Dorsolateral prefrontal cortex (tissue), 120 donors: ENCODE measurements at regions of chr9 and their contacts with region 1.

Region 1: DNA sequence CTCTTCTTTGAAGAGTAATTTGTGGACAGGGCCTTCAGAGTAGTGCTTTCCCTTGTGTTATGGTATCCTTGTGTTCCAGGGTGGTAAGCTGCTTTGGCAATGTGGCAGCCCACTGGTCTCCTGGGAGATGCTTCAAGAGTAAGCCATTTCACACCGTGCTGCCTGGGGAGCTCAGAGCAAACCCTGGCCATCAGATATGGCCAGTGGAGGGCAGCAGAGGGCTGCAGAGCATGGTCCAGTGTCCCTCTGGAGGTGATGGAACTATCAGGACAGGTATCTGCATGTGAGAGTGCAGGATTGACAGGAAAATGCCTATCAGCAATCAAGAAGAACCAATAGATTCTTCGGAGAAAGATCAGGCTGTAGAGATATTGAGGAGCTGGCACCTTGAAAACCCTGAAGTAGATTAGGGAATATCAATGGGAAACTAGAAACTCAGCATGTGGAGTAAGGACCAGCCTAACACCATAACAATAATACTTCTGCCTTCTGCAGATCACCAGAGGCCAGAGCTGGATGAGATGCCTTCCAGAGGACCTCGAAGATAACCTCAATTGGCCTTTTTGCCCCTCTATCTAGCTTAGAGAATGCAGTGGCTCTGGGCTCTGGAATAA is 90.8 kb downstream of the PLPPR1 start:
- DNase-seq: peak; percentile 43 to 83 (median 70)
- H3K4me3 ChIP-seq: no peak overlapping the region
- H3K27ac ChIP-seq: peak overlapping the region in 35 of 59 donors; percentile 6 to 77 (median 33)
- H3K27me3 ChIP-seq: no peaks in the 10 kb centered on the region
- CTCF ChIP-seq: peak; percentile 59 to 96 (median 86)

Region 2: DNA sequence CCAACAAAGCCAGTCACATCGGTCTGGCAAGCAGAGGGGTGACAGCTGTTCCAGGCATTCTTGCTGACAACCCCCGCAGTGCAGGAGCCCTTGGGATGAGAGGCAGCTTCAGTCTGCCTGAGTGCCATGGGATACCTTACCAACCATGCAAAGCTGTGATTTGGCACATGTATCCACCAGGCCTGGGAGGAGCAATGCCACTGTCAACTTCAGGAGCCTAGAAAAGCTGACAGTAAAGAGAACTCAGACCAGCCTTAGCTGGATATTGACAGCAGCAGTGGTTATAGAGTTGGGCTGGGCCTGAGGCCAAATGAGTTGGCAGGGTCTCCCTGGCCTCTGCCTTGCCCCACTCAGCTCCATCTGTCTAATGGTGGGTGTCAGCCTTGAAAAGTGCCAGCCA is 100.8 kb before region 1 on chr9:
- intact Hi-C with region 1: no loop called
- DNase-seq: no peak
- H3K4me3 ChIP-seq: no peak overlapping the region
- H3K27ac ChIP-seq: no peak overlapping the region
- H3K27me3 ChIP-seq: no peaks in the 10 kb centered on the region
- CTCF ChIP-seq: no peak

Region 3: GRCh38 chr9:101235105-101235866 is 116.0 kb after region 1 on chr9:
- intact Hi-C with region 1: loop called (anchors 2 kb)
- DNase-seq: no peak
- H3K4me3 ChIP-seq: peak overlapping the region in 31 of 59 donors; percentile 3 to 47 (median 17)
- H3K27ac ChIP-seq: peak overlapping the region in 58 of 59 donors; percentile 13 to 91 (median 81)
- H3K27me3 ChIP-seq: no peaks in the 10 kb centered on the region
- CTCF ChIP-seq: peak; percentile 59 to 94 (median 81)